ENCODE measurements at regions of chr12 and their contacts with region 1.

Region 1: GRCh38 chr12:111412007-111412829 is 6.5 kb downstream of the SH2B3 start:
- DNase-seq: no peak
- H3K4me3 ChIP-seq: no peak overlapping the region
- H3K4me3 Mint-ChIP-seq: peak overlapping the region in 6 of 7 donors; percentile 37 to 78 (median 65)
- H3K27ac ChIP-seq: peak overlapping the region; percentile 24
- H3K27ac Mint-ChIP-seq: peak overlapping the region; percentile 76 to 98 (median 92)
- H3K4me1 ChIP-seq: peaks cover 78% of the 10 kb centered on the region
- H3K4me1 Mint-ChIP-seq: peaks cover 74 to 93% (median 83%) of the 10 kb centered on the region in 3 donors
- H3K27me3 ChIP-seq: no peaks in the 10 kb centered on the region
- H3K27me3 Mint-ChIP-seq: no peaks in the 10 kb centered on the region

Region 2: DNA sequence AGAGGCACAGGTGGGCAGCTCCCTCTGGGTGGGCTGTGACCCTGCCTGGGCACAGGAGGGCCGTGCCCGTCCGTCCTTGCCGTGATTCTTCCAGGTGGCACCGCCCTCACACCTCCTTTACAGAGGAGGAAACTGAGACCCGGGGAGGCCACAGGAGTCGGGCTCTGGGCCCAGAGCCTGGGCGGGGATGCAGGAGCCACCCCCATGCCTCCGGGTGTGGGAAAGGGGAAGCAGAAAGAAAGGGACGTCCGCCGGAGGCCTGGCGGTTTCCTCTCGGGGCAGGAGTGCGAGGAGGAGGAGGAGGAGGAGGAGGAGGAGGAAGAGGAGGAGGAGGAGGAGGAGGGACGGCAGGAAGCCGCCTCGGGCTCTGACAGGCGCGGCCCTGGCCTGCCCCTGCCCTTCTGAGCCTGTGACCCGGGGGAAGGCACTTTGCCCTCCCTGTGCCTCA is 16.5 kb after region 1 on chr12:
- CTCF ChIA-PET with region 1: interaction called, 1,032 read pairs
- POLR2A ChIA-PET with region 1: interaction called, 24 read pairs
- DNase-seq: peak in 1 of 5 donors; percentile 46
- H3K4me3 ChIP-seq: no peak overlapping the region
- H3K4me3 Mint-ChIP-seq: peak overlapping the region; percentile 35 to 92 (median 74)
- H3K27ac ChIP-seq: peak overlapping the region; percentile 43
- H3K27ac Mint-ChIP-seq: peak overlapping the region; percentile 77 to 100 (median 94)
- H3K4me1 ChIP-seq: peaks cover 98% of the 10 kb centered on the region
- H3K4me1 Mint-ChIP-seq: peaks cover 83 to 95% (median 88%) of the 10 kb centered on the region in 3 donors
- H3K27me3 ChIP-seq: no peaks in the 10 kb centered on the region
- H3K27me3 Mint-ChIP-seq: no peaks in the 10 kb centered on the region

Measured in CD8-positive, alpha-beta memory T cell (primary cell).